HepG2 (cell line): ENCODE measurements at regions of chr1 and their contacts with region 1.

Region 1: GRCh38 chr1:155308493-155309422 is at the start of gene FDPS:
- DNase-seq: peak; percentile 97
- ATAC-seq: peak; percentile 92
- H3K4me3 ChIP-seq: peak within 1 kb of the TSS; percentile 92 to 95 (median 94)
- H3K27ac ChIP-seq: peak within 1 kb of the TSS; percentile 83
- H3K4me1 ChIP-seq: peaks cover 84% of the 10 kb centered on the region
- H3K27me3 ChIP-seq: no peaks in the 10 kb centered on the region; a peak in 1 of 5 replicates
- CTCF ChIP-seq: no peak; the same call in 1 of the 2 replicates
- EP300 ChIP-seq: peak in 1 of 2 experiments; percentile 57; a peak in 2 of 4 replicates
- POLR2A ChIP-seq: peak; percentile 71 to 84
- RAD21 ChIP-seq: 0 out of 2 replicates have a peak, but pooled peaks have one; percentile 22
- total RNA-seq, gene FDPS: 519 and 610 TPM in 2 replicates

Region 2: GRCh38 chr1:155172732-155173477 is 135.9 kb before region 1 on chr1 and contains the start of gene KRTCAP2:
- CTCF ChIA-PET with region 1: no interaction called
- POLR2A ChIA-PET with region 1: no interaction called
- in situ Hi-C with region 1: no loop called
- intact Hi-C with region 1: no loop called
- DNase-seq: peak; percentile 93
- ATAC-seq: peak; percentile 78
- H3K4me3 ChIP-seq: peak within 1 kb of the TSS; percentile 71 to 92 (median 79)
- H3K27ac ChIP-seq: peak within 1 kb of the TSS; percentile 73
- H3K4me1 ChIP-seq: peaks cover 43% of the 10 kb centered on the region
- H3K27me3 ChIP-seq: 0 out of 5 replicates have a peak, but pooled peaks cover 0 to 1% of the 10 kb centered on the region in 2 experiments
- CTCF ChIP-seq: peak; percentile 98
- EP300 ChIP-seq: peak in 1 of 2 experiments; percentile 37; a peak in 1 of 4 replicates
- POLR2A ChIP-seq: peak; percentile 71 to 77
- RAD21 ChIP-seq: peak; percentile 37; the same call in 1 of the 2 replicates
- total RNA-seq, gene KRTCAP2: 48.5 and 79.4 TPM in 2 replicates

Region 3: GRCh38 chr1:155323798-155324610 is 15.2 kb after region 1 on chr1:
- CTCF ChIA-PET with region 1: no interaction called
- POLR2A ChIA-PET with region 1: interaction called, 12 read pairs
- in situ Hi-C with region 1: no loop called
- intact Hi-C with region 1: loop called (anchors 1 kb)
- DNase-seq: peak; percentile 93
- ATAC-seq: peak; percentile 84
- H3K4me3 ChIP-seq: peak overlapping the region; percentile 80 to 94 (median 81)
- H3K27ac ChIP-seq: peak overlapping the region; percentile 71
- H3K4me1 ChIP-seq: peaks cover 36% of the 10 kb centered on the region
- H3K27me3 ChIP-seq: no peaks in the 10 kb centered on the region; a peak in 1 of 5 replicates
- CTCF ChIP-seq: no peak
- EP300 ChIP-seq: no peak
- POLR2A ChIP-seq: peak in 1 of 2 experiments; percentile 61; a peak in 2 of 4 replicates
- RAD21 ChIP-seq: no peak

Region 4: DNA sequence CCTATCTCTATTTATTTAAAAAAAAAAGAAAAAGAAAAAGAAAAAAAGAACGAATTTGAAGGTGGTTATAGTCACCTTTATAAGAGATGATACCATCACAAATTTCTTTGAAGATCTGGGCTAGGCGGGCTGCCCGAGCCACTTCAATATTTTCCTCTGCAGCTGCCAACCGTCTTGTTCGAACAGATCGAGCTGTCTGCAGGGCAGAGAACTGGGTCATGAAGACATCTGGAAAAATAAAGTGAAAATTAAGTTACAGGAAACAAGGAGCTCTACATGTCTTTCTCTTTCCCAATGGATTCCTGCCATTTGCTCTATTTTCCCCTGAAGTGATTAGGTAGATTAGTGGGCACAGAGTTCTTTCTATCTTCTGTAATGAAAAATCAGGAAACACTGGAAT is 43.9 kb after region 1 on chr1:
- CTCF ChIA-PET with region 1: no interaction called
- POLR2A ChIA-PET with region 1: no interaction called
- in situ Hi-C with region 1: no loop called
- intact Hi-C with region 1: no loop called
- DNase-seq: no peak
- ATAC-seq: no peak
- H3K4me3 ChIP-seq: no peak overlapping the region
- H3K27ac ChIP-seq: no peak overlapping the region
- H3K4me1 ChIP-seq: no peaks in the 10 kb centered on the region
- H3K27me3 ChIP-seq: no peaks in the 10 kb centered on the region
- CTCF ChIP-seq: no peak
- EP300 ChIP-seq: no peak
- POLR2A ChIP-seq: no peak
- RAD21 ChIP-seq: no peak

Region 5: DNA sequence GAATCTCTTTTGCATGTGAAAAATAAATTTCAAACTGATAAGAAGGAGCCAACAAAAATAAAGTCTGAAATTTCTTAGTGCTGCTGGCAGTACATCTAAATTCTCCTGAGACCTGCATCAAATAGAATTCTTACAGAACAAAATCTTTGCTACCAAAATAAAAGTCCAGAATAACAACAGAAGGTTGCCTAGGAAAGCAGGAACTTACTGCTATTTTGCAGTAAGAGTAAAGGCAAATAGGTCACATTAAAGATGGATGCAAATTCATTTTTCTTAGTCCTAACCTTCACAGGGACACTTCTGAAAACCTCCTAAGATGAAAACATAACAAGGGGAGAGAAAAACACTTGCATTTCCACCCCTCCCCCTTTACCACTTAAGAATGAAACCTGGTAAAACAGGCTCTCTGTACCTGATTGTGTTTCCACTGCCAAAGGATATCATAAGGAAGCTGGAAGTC is 70.9 kb after region 1 on chr1:
- CTCF ChIA-PET with region 1: no interaction called
- POLR2A ChIA-PET with region 1: no interaction called
- in situ Hi-C with region 1: no loop called
- intact Hi-C with region 1: no loop called
- DNase-seq: no peak
- ATAC-seq: no peak
- H3K4me3 ChIP-seq: no peak overlapping the region
- H3K27ac ChIP-seq: no peak overlapping the region
- H3K4me1 ChIP-seq: no peaks in the 10 kb centered on the region
- H3K27me3 ChIP-seq: no peaks in the 10 kb centered on the region
- CTCF ChIP-seq: no peak
- EP300 ChIP-seq: no peak
- POLR2A ChIP-seq: no peak
- RAD21 ChIP-seq: no peak